Left cardiac atrium (tissue), 4 donors: ENCODE measurements at regions of chr4 and their contacts with region 1.

Region 1: DNA sequence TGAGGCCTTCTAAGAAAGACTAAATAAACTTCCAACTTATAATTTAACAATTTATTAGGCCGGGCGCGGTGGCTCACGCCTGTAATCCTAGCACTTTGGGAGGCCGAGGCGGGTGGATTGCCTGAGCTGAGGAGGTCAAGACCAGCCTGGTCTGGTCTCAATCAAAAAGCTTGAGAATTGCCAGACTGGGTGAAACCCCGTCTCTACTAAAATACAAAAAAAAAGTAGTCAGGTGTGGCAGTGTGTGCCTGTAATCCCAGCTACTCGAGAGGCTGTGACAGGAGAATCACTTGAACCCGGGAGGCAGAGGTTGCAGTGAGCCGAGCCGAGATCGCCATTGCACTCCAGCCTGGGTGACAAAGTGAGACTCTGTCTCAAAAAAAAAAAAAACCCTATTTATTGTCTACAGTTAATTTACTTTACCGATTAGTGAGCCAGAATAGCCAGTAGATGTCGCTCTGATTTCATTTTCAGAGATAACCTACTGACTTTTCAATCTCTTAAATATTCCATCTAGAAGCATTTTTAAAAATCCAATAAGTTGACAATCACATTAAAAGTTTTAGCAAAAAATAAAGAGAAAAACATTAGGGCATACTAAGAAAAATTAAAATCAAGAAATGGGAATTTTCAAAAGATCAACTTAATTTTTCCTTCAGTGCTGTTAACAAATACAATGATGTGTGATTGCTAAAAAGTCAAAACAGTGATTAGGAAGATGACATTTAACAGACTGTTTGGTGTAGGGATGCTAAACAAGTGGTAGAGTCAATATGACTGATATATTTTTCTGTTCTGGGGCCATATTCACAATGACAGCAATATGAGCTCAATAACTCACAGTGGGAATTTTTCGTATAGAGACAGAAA is 4.3 kb upstream of the SHROOM3 start:
- DNase-seq: no peak
- ATAC-seq: no peak

Region 2: DNA sequence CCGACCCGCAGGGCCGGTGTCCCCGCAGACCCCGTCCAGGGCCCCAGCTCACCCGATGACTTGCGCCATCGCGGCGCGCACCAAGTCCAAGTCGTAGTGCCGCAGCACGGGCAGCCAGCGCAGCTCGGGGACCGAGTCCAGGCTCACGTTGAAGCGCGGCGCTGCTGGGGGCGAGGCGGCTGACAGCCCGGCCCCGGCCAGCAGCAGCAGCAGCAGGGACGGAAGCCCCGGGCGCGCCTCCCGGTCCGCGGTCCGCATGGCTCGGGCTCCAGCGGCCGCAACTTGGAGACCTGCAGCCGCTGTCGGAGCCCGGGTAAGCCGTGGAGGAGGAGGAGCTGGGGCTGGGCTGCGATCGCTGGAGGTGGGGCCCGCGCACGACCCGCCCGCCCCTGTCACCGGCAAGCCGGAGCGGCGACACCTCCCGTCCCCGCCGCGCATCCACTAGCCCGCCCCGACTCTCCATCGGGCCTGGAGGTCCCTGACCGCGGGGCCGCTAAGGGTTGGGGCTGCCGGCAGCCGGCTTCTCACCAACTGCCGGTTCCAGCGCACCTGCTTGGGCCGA is 490.0 kb before region 1 on chr4 and contains the start of gene NAAA:
- intact Hi-C with region 1: no loop called
- DNase-seq: peak; percentile 78
- ATAC-seq: peak; percentile 94 to 97
- total RNA-seq, gene NAAA: 12.3 to 13.8 TPM

Region 3: DNA sequence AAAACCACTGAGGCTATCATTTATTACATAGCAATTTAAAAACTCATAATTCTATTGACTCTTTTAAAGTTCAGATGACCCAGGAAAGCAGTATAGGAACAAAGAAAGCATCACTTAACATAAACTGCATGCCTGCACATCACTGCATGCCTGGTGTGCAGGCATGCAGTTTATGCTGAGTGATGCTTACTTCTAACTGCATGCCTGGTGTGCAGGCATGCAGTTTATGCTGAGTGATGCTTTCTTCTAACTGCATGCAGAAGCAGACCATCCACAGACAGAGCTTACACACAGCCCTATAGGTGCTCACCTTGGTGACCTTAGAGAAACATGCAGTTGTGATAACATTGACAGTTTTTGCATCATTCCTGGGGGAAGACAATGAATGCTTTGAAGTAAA is 457.0 kb before region 1 on chr4:
- intact Hi-C with region 1: no loop called
- DNase-seq: no peak
- ATAC-seq: no peak

Region 4: GRCh38 chr4:76179398-76180318 is 251.1 kb before region 1 on chr4:
- intact Hi-C with region 1: loop called in 1 of 2 experiments (anchors 5 kb)
- DNase-seq: peak; percentile 91
- ATAC-seq: peak; percentile 88 to 90

Region 5: GRCh38 chr4:76494243-76494642 is 63.5 kb after region 1 on chr4:
- intact Hi-C with region 1: no loop called
- DNase-seq: no peak
- ATAC-seq: no peak

Region 6: DNA sequence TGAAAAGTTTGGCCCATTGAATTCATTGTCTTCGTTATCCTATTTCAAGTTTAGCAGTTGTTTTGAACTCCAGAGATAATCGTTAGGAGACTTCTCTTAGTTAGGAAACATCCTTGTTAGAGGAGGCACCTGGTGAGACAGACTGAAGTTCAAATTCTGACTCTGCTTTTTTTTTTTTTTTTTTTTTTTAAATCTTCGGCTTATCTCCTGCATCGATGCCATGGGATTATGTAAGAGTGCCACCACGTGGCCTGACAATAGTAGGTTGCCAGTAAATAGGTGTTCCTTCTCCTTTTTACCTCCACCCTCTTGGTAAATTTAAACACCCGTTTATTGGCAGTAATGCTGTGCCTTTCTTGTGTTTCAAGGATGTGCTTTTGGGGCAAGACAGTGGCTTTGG is 317.9 kb after region 1 on chr4:
- intact Hi-C with region 1: no loop called
- DNase-seq: no peak
- ATAC-seq: no peak